ENCODE measurements at regions of chr5 and their contacts with region 1.

Region 1: GRCh38 chr5:110469486-110469885 is 257.0 kb downstream of the TMEM232 start:
- DNase-seq: no peak
- H3K4me3 ChIP-seq: no peak overlapping the region
- H3K4me3 Mint-ChIP-seq: no peak overlapping the region
- H3K27ac Mint-ChIP-seq: no peak overlapping the region
- H3K4me1 ChIP-seq: no peaks in the 10 kb centered on the region
- H3K4me1 Mint-ChIP-seq: no peaks in the 10 kb centered on the region
- H3K27me3 ChIP-seq: no peaks in the 10 kb centered on the region
- H3K27me3 Mint-ChIP-seq: no peaks in the 10 kb centered on the region
- CTCF ChIP-seq: no peak

Region 2: GRCh38 chr5:110361461-110361860 is 108.0 kb before region 1 on chr5:
- CTCF ChIA-PET with region 1: interaction called, 10 read pairs
- POLR2A ChIA-PET with region 1: no interaction called
- intact Hi-C with region 1: no loop called
- DNase-seq: no peak
- H3K4me3 ChIP-seq: no peak overlapping the region
- H3K4me3 Mint-ChIP-seq: no peak overlapping the region
- H3K27ac Mint-ChIP-seq: no peak overlapping the region
- H3K4me1 ChIP-seq: no peaks in the 10 kb centered on the region
- H3K4me1 Mint-ChIP-seq: no peaks in the 10 kb centered on the region
- H3K27me3 ChIP-seq: no peaks in the 10 kb centered on the region
- H3K27me3 Mint-ChIP-seq: no peaks in the 10 kb centered on the region
- CTCF ChIP-seq: no peak